ENCODE measurements at regions of chr2 and their contacts with region 1.

Region 1: DNA sequence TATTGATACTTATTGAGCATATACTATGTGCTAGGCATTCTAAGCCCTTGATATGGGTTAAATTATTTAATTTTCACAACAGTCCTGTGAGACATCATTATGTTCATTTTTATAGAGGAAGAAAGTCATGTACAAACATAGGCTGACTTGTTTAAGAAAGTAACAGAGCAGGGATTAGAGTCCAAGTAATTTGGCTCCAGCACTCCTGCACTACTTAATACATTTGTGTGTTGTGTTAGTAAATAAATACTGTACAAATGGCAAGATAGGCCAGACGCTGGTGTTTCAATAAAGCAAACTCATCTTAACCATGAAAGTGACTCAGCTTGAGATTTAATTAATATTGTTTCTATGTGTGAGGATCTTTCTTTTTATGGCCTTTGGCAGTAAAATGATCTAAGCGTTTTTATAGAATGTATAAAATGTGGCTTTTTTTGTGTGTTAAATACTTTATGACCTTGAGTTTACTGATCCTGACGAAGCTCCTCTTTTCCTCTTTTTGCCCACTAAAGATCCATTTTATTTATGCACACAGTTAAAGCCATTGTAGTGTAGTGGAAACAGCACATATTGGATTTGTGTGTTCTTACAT is 21.3 kb downstream of the NBEAL1 start:
- DNase-seq: no peak
- H3K4me3 Mint-ChIP-seq: no peak overlapping the region
- H3K27ac Mint-ChIP-seq: no peak overlapping the region
- H3K4me1 Mint-ChIP-seq: peaks cover 18% of the 10 kb centered on the region
- H3K27me3 Mint-ChIP-seq: no peaks in the 10 kb centered on the region
- CTCF ChIP-seq: no peak

Region 2: GRCh38 chr2:203002054-203002821 is 33.7 kb before region 1 on chr2:
- CTCF ChIA-PET with region 1: interaction called, 5 read pairs
- intact Hi-C with region 1: loop called (anchors 1 kb)
- DNase-seq: peak; percentile 60
- H3K4me3 Mint-ChIP-seq: peak overlapping the region; percentile 10
- H3K27ac Mint-ChIP-seq: peak overlapping the region; percentile 68
- H3K4me1 Mint-ChIP-seq: peaks cover 18% of the 10 kb centered on the region
- H3K27me3 Mint-ChIP-seq: no peaks in the 10 kb centered on the region
- CTCF ChIP-seq: no peak

Measured in Calu3 (cell line).